AG04449 (cell line): ENCODE measurements at regions of chr2 and their contacts with region 1.

Region 1: GRCh38 chr2:1550658-1551316 is 137.5 kb downstream of the TPO start:
- DNase-seq: no peak
- H3K4me3 ChIP-seq: no peak overlapping the region; the same call in 1 of the 2 replicates
- CTCF ChIP-seq: peak; percentile 98

Region 2: DNA sequence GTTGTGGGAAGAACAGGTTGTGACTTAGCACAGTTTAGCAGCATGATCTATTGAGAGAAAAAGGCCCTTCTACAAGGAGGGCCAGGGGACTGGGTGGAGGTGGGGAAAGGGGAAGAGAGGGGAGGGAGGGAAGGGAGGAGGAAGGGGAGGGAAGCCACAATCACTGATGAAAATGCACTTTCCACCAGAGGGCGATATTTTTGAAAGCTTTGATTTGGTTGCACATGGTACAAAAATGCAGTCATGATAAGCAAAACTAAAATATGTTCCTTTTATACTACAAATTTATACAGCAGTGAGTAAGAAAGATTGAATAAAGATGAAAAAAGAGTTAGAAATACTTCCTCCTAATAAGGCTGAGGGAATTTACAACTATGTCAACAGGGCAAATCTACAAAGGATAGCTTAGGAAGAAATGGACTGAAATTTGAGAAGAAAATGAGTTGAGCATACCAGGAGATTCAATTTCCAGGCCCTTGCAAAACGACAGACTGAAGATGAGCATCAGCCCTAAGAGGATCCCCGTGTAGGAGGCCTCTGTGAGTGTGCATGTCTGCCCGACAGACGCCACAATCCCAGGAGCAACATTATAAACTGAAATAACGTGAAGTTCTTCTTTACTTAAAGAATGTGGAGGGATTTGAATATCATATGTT is 1304.2 kb before region 1 on chr2:
- CTCF ChIA-PET with region 1: interaction called, 15 read pairs
- POLR2A ChIA-PET with region 1: no interaction called
- DNase-seq: peak; percentile 45
- H3K4me3 ChIP-seq: no peak overlapping the region
- CTCF ChIP-seq: peak; percentile 57

Region 3: DNA sequence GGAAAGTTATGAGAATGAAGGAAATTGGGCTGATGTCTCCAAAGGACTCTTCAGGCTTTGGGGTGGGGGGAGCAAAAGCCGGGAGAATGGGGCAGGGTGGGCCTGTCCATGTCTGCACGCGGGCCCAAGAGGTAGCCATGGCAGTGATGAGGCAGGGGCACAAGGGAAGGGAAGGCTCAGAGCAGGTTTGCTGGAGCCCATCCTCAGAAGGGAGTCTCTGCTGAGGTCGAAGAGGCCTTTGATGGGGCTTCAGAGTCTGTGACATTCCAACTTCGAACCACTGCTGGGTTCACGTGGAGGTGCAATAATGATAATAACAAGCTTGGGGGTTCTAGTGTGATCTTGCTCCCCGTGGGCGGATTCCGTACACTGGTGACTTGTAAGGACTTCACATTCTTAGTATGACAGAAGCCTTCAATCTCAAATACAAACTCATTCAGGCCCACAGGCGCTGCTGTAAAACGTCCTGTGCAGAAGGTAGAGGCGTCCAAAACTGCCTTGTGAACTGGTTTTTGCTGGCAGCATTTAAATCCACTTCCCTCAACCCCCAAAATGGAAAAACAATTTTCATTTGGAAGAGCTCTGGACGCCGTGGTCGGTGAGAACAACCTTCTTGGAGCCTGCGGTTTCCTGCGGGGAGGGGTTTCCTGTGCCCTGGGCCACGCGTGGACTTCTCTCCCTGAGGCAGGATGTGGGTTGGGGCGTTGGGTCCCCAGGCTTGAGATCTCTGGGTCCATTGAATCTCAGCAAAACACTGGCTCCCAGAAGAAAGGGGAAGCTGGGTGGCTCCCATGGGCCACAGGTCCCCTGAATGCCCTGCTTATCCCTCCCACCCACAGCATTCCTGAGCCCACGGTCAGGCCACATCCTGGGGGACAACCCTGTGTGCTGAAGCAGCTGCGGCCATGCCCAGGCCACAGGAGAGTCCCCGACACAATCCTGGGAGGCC is 13.4 kb after region 1 on chr2:
- CTCF ChIA-PET with region 1: interaction called, 40 read pairs
- POLR2A ChIA-PET with region 1: no interaction called
- DNase-seq: no peak
- H3K4me3 ChIP-seq: no peak overlapping the region
- CTCF ChIP-seq: no peak

Region 4: GRCh38 chr2:1631804-1632348 is 81.1 kb after region 1 on chr2:
- CTCF ChIA-PET with region 1: interaction called, 14 read pairs
- POLR2A ChIA-PET with region 1: no interaction called
- DNase-seq: peak; percentile 59
- H3K4me3 ChIP-seq: no peak overlapping the region
- CTCF ChIP-seq: no peak

Region 5: DNA sequence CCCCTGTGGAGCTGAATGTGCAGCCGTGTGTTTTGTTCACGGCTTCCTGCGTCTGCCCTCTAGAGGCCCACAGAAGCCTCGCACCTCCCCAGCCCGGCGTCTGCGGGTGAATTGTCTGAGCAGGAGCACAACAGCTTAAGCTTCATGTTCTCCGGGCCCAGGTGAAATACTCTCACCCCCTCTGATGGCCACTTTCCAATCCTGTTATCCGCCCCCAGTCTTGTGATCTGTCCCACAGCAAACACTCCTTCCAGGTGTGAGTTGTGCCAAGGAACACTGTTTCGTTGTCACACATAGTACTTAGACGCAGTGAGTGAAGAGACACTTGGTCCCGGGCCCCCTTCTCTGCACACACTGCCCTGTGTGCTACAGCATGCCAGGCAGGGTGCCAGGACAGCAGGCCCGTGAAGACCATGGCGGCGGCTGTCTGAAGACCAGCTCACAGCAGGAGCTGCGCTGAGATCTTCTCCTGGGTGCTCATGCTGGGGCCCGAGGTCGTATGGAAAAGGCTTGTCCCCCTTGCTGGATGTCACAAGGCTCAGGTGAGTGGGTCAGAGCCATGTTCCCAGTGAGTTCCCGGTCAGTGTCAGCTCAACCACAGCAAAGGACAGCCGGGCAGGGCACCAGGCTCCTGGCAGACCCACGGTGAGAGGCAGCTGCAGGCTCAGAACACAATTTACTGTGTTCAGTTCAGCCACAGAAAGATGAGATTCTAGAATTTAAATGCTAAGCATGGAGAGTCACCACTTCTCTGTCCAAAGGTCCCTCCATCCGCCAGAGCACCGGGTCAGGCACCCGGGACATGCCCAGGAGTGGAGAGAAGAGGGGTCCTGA is 200.4 kb after region 1 on chr2:
- CTCF ChIA-PET with region 1: interaction called, 42 read pairs
- POLR2A ChIA-PET with region 1: no interaction called
- DNase-seq: no peak
- H3K4me3 ChIP-seq: no peak overlapping the region
- CTCF ChIP-seq: peak; percentile 96

Region 6: DNA sequence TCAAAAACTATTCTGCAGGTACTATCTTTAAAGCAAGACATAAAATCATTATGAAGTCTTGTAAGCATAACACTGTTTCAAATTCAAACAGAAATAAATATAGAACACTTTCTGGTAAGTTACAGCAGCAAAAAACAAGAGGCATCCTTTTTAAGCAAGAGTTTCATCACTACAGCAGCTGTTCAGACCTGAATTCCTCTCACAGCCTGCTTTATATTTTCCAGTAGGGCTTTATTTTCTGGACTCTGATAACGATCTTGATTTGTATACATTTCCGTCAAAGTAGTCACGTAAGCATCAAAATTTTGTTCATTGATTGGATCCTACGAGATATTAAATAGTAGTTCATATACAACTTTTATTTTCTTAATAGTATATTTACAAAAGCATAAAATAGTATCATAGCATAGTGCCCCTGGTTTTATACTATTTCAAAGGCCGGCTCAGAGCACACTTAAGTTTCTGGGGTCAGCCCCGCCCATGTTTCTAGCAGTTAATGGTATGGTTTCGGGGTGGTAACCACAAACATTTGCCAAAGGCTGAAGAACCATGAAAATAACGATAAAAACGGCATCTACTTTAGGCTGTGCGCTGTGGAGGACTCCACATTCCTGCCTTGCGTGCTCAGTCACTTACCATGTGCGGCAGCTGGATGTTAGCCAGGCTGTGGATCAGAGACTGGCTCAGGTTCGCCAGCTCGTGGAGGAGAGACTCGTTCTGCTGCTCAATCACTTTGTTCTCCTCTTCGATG is 241.1 kb after region 1 on chr2:
- CTCF ChIA-PET with region 1: interaction called, 16 read pairs
- POLR2A ChIA-PET with region 1: no interaction called
- DNase-seq: peak; percentile 94
- H3K4me3 ChIP-seq: no peak overlapping the region
- CTCF ChIP-seq: no peak